ENCODE measurements at regions of chr4 and their contacts with region 1.

Region 1: GRCh38 chr4:82886147-82886942 is 4.6 kb downstream of the SEC31A start:
- DNase-seq: no peak
- H3K4me3 ChIP-seq: peak overlapping the region; percentile 4
- H3K27ac ChIP-seq: peak overlapping the region; percentile 39
- H3K4me1 ChIP-seq: peaks cover 70% of the 10 kb centered on the region
- H3K27me3 ChIP-seq: no peaks in the 10 kb centered on the region
- CTCF ChIP-seq: no peak

Region 2: GRCh38 chr4:82833696-82834313 is 52.5 kb before region 1 on chr4:
- intact Hi-C with region 1: loop called (anchors 10 kb)
- DNase-seq: no peak
- H3K4me3 ChIP-seq: no peak overlapping the region
- H3K27ac ChIP-seq: peak overlapping the region; percentile 66
- H3K4me1 ChIP-seq: peaks cover 16% of the 10 kb centered on the region
- H3K27me3 ChIP-seq: no peaks in the 10 kb centered on the region
- CTCF ChIP-seq: no peak